Caco-2 (cell line): ENCODE measurements at regions of chr15 and their contacts with region 1.

Region 1: GRCh38 chr15:59313641-59314332 is 58.9 kb downstream of the MYO1E start:
- DNase-seq: no peak
- H3K4me3 ChIP-seq: no peak overlapping the region
- H3K4me3 Mint-ChIP-seq: no peak overlapping the region
- H3K27ac Mint-ChIP-seq: no peak overlapping the region
- H3K4me1 ChIP-seq: peaks cover 11% of the 10 kb centered on the region
- H3K4me1 Mint-ChIP-seq: peaks cover 33% of the 10 kb centered on the region
- H3K27me3 ChIP-seq: no peaks in the 10 kb centered on the region
- H3K27me3 Mint-ChIP-seq: no peaks in the 10 kb centered on the region
- CTCF ChIP-seq: no peak

Region 2: DNA sequence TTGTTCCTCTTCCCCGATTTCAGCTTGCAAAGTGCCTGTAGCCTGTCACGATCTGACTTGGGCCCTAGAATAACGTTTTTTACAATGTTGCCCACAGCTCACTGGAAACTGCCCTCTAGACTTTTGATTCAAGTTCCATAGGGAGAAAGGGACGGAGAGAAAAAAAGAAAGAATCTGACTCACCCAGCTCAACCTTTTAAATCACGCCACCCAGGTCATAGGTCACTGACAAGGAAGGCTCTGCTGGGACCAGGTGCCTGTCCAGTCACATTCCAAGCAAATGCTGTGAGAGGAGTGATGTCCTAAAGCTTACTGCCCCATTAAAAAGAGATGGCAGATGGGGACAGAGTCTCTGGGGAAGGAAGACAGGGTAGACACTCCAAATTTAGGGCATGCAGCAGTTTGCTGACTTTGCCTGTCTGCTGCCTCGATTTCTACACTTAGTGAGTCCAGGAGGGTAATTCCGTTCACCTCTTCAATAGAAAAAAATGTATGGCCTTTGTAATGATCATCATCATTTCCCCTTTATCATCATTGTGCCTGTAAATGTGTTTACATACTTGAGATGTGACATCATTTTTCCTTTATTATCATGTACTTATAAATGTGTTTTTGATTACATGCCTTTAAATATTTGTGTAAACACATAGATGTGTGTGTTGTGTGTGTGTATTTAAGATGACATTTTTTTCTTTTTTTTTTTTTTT is 67.3 kb after region 1 on chr15:
- CTCF ChIA-PET with region 1: interaction called, 12 read pairs
- POLR2A ChIA-PET with region 1: no interaction called
- intact Hi-C with region 1: no loop called
- DNase-seq: peak; percentile 89 to 94
- H3K4me3 ChIP-seq: no peak overlapping the region
- H3K4me3 Mint-ChIP-seq: peak overlapping the region; percentile 60
- H3K27ac Mint-ChIP-seq: peak overlapping the region; percentile 91
- H3K4me1 ChIP-seq: peaks cover 40% of the 10 kb centered on the region
- H3K4me1 Mint-ChIP-seq: peaks cover 7% of the 10 kb centered on the region
- H3K27me3 ChIP-seq: no peaks in the 10 kb centered on the region
- H3K27me3 Mint-ChIP-seq: no peaks in the 10 kb centered on the region
- CTCF ChIP-seq: no peak

Region 3: GRCh38 chr15:59688841-59689625 is 375.2 kb after region 1 on chr15 and contains the start of gene BNIP2:
- CTCF ChIA-PET with region 1: no interaction called
- POLR2A ChIA-PET with region 1: no interaction called
- intact Hi-C with region 1: no loop called
- DNase-seq: peak; percentile 98 to 99
- H3K4me3 ChIP-seq: peak within 1 kb of the TSS; percentile 99
- H3K4me3 Mint-ChIP-seq: peak within 1 kb of the TSS; percentile 87
- H3K27ac Mint-ChIP-seq: peak within 1 kb of the TSS; percentile 90
- H3K4me1 ChIP-seq: 0 out of 2 replicates have a peak, but pooled peaks cover 4% of the 10 kb centered on the region
- H3K4me1 Mint-ChIP-seq: peaks cover 14% of the 10 kb centered on the region
- H3K27me3 ChIP-seq: no peaks in the 10 kb centered on the region
- H3K27me3 Mint-ChIP-seq: no peaks in the 10 kb centered on the region
- CTCF ChIP-seq: no peak
- total RNA-seq, gene BNIP2: 54.0 and 56.0 TPM in 2 replicates